ENCODE measurements at regions of chr16 and their contacts with region 1.

Region 1: GRCh38 chr16:15961060-15961511 is 11.7 kb downstream of the ABCC1 start:
- DNase-seq: peak; percentile 76
- H3K4me3 Mint-ChIP-seq: peak overlapping the region; percentile 47
- H3K27ac Mint-ChIP-seq: peak overlapping the region; percentile 95
- H3K4me1 Mint-ChIP-seq: peaks cover 63% of the 10 kb centered on the region
- H3K27me3 Mint-ChIP-seq: no peaks in the 10 kb centered on the region

Region 2: DNA sequence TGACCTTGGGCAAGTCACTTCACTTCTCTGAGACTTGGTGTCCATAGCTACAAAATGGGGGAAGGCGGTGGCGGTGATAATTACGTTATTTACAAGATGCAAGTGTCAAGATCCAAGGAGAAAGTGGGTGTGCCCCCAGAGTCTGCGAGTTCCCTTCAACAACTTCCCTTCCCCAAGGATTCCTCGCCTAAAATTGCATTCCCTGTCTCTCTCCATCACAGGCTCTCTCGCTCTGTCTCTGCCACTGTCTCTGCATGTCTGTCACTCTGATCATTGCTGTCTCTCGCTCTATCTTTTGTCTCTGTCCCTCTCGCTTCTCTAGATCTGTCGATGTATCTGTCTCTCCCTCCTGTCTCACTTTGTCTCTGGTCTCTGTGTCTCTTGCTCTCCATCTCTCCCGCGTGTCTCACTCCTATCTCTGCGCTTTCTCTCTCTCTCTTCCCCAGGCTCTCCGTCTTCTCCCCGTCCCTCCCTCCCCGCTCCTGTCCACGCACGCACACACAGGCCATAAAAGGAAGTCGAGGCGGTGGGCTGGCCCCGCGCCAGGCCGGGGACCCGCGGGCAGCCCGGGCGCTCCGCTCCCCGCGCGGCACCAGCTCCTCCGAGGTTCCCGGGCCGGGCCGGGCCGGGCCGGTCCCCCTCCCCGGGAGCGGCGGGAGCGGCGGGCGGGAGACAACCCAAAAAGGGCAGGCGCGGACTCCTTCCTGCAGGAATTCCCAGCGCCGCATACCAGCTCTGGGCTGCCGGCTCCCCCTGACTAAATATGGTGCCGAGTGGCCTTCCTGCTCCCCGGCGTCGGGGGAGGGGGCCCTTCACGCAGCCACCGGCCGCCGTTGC is 103.1 kb before region 1 on chr16:
- intact Hi-C with region 1: no loop called
- DNase-seq: no peak
- H3K4me3 Mint-ChIP-seq: peak overlapping the region; percentile 54
- H3K27ac Mint-ChIP-seq: no peak overlapping the region
- H3K4me1 Mint-ChIP-seq: peaks cover 7% of the 10 kb centered on the region
- H3K27me3 Mint-ChIP-seq: peaks cover 39% of the 10 kb centered on the region

Region 3: DNA sequence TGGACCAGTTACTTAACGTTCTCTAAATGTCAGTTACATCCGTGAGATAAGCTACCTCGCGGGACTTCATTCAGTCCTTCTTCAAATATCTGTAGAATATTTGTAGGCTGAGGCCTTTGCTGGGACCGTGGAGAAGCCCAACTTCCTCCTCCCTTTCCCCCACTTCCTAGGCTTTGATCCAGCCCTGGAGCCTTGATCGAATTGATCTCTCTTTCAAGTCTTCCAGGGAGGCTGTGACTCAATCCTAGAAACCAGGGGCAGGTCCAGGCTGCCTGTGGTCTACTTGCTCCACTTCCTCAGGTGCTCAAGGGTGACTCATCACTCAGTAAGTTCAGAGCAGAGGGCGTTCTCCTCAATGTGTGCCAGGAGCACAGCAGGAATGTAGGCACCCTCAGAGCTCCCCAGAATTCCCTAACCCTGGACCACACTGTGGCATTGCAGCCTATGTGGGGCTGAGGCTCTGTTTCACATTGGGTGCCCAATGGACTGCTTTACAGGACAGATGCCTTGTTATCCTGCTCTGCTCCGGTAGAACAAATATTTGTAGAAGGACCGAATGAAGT is 61.5 kb before region 1 on chr16:
- intact Hi-C with region 1: loop called (anchors 1 kb)
- DNase-seq: peak; percentile 54
- H3K4me3 Mint-ChIP-seq: peak overlapping the region; percentile 46
- H3K27ac Mint-ChIP-seq: peak overlapping the region; percentile 6
- H3K4me1 Mint-ChIP-seq: peaks cover 33% of the 10 kb centered on the region
- H3K27me3 Mint-ChIP-seq: peaks cover 4% of the 10 kb centered on the region

Region 4: GRCh38 chr16:15949210-15950160 is 11.6 kb before region 1 on chr16 and contains the start of gene ABCC1:
- intact Hi-C with region 1: loop called (anchors 1 kb)
- DNase-seq: peak; percentile 34
- H3K4me3 Mint-ChIP-seq: peak within 1 kb of the TSS; percentile 99
- H3K27ac Mint-ChIP-seq: peak within 1 kb of the TSS; percentile 100
- H3K4me1 Mint-ChIP-seq: peaks cover 62% of the 10 kb centered on the region
- H3K27me3 Mint-ChIP-seq: peaks cover 2% of the 10 kb centered on the region
- total RNA-seq, gene ABCC1: 102 and 108 TPM in 2 replicates

Region 5: DNA sequence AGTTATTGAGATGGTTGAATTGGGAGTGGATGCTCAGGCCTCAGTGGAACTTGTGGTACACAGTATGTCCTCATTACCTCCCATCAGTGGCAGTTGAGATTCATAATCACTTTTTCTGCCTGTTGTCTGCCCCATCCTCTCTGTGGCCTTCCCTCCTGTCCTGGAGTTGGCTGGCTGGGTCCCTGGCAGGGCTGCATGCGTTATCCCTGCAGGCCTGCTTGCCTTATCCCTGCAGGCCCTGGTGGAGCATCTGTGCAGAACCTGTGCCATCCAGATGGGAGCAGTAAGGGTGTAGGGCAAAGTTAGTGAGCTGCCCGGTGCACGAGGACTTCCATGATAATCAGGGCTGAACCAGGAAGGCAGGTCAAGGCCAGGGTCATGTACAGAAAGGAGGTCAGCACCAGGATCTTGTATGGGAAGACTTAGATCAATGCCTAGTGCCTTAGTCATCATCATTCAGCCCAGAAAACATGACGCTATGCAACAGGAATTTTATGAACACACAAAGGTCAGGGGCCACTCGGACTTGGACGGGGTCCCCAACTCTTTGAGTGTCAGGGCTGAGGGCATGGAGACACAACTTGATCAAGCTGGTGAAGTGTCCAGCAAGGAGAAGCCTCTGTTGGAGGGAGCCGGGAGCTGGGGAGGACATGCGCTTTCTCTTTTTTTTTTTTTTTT is 35.5 kb after region 1 on chr16:
- intact Hi-C with region 1: loop called (anchors 1 kb)
- DNase-seq: no peak
- H3K4me3 Mint-ChIP-seq: no peak overlapping the region
- H3K27ac Mint-ChIP-seq: peak overlapping the region; percentile 55
- H3K4me1 Mint-ChIP-seq: peaks cover 47% of the 10 kb centered on the region
- H3K27me3 Mint-ChIP-seq: no peaks in the 10 kb centered on the region

Region 6: GRCh38 chr16:16025214-16025968 is 64.3 kb after region 1 on chr16:
- intact Hi-C with region 1: loop called (anchors 1 kb)
- DNase-seq: peak; percentile 48
- H3K4me3 Mint-ChIP-seq: peak overlapping the region; percentile 54
- H3K27ac Mint-ChIP-seq: peak overlapping the region; percentile 91
- H3K4me1 Mint-ChIP-seq: peaks cover 30% of the 10 kb centered on the region
- H3K27me3 Mint-ChIP-seq: no peaks in the 10 kb centered on the region